ENCODE measurements at regions of chr14 and their contacts with region 1.

Region 1: DNA sequence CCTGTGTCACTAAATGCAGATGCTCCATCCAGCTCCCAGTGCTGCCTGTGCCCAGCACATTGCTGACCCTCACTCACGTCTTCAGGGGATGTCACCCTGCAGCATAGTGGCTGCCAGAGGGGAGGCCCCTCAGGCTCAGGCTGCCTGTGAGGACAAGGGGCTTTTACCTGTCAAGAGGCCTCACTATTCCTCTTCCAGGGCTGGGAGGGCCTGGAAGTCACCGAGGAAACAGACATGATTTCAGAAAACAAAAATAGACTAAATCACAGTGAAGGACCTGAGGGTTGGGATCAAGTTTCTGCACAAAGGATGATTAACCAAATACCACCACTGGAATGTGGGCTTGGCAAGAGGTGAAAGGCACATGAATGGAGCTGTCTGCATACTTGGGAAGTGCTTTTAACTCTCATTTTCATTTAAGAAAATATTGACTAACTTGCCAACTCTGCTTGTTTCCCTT is 1202.3 kb downstream of the BCL11B start:
- DNase-seq: no peak
- ATAC-seq: peak; percentile 45

Region 2: GRCh38 chr14:98099527-98099926 is 29.8 kb after region 1 on chr14:
- intact Hi-C with region 1: loop called (anchors 1 kb)
- DNase-seq: no peak
- ATAC-seq: no peak

Measured in sciatic nerve (tissue), 2 donors.